Heart right ventricle (tissue), 16 donors: ENCODE measurements at regions of chr16 and their contacts with region 1.

Region 1: GRCh38 chr16:20073203-20074098 is at the start of gene GPR139:
- DNase-seq: no peak
- ATAC-seq: no peak
- H3K4me3 ChIP-seq: peak within 1 kb of the TSS in 1 of 10 donors; percentile 14
- H3K27ac ChIP-seq: no peak within 1 kb of the TSS
- H3K4me1 ChIP-seq: peaks cover 0 to 6% (median 0%) of the 10 kb centered on the region in 9 donors
- H3K27me3 ChIP-seq: peaks cover 4 to 87% (median 56%) of the 10 kb centered on the region in 7 donors
- CTCF ChIP-seq: no peak
- total RNA-seq, gene GPR139: not detected

Region 2: GRCh38 chr16:19595043-19595767 is 478.2 kb before region 1 on chr16:
- intact Hi-C with region 1: no loop called
- DNase-seq: peak; percentile 24 to 50
- ATAC-seq: peak; percentile 52 to 97 (median 88)
- H3K4me3 ChIP-seq: no peak overlapping the region
- H3K27ac ChIP-seq: peak overlapping the region in 4 of 10 donors; percentile 26 to 51 (median 35)
- H3K4me1 ChIP-seq: peaks cover 0 to 9% (median 0%) of the 10 kb centered on the region in 9 donors
- H3K27me3 ChIP-seq: no peaks in the 10 kb centered on the region
- CTCF ChIP-seq: no peak

Region 3: DNA sequence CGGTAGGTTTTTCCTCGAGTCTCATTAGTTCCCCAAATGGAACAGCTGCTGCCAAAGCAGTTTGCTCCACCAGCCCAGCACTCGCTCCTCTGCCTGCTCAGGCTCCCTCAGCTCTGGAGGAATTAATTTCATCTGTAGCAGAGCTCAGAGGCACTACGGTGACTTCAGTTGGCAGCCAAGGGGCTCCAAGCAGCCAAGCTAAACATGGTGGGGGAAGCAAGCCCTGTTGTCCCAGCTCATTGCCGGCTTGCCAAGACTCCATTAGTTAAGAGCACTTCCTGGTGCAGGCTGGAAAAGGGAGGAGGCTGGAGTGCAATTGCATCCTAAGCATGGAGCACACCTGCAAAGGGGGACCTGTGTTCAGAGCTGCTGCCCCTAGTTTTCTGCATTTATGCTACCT is 110.2 kb before region 1 on chr16:
- intact Hi-C with region 1: no loop called
- DNase-seq: peak; percentile 36 to 63
- ATAC-seq: peak in 6 of 8 donors; percentile 29 to 96 (median 60)
- H3K4me3 ChIP-seq: no peak overlapping the region
- H3K27ac ChIP-seq: no peak overlapping the region
- H3K4me1 ChIP-seq: no peaks in the 10 kb centered on the region
- H3K27me3 ChIP-seq: peaks cover 0 to 38% (median 4%) of the 10 kb centered on the region in 7 donors
- CTCF ChIP-seq: no peak

Region 4: GRCh38 chr16:20014034-20014433 is 59.4 kb before region 1 on chr16:
- intact Hi-C with region 1: loop called in 1 of 10 experiments (anchors 10 kb)
- DNase-seq: no peak
- ATAC-seq: no peak
- H3K4me3 ChIP-seq: no peak overlapping the region
- H3K27ac ChIP-seq: no peak overlapping the region
- H3K4me1 ChIP-seq: no peaks in the 10 kb centered on the region
- H3K27me3 ChIP-seq: peaks cover 0 to 22% (median 5%) of the 10 kb centered on the region in 7 donors
- CTCF ChIP-seq: no peak

Region 5: GRCh38 chr16:20216591-20217217 is 143.3 kb after region 1 on chr16:
- intact Hi-C with region 1: no loop called
- DNase-seq: no peak
- ATAC-seq: no peak
- H3K4me3 ChIP-seq: peak overlapping the region in 1 of 10 donors; percentile 8
- H3K27ac ChIP-seq: peak overlapping the region in 3 of 10 donors; percentile 23 to 57 (median 29)
- H3K4me1 ChIP-seq: peaks cover 0 to 4% (median 0%) of the 10 kb centered on the region in 9 donors
- H3K27me3 ChIP-seq: peaks cover 0 to 8% (median 0%) of the 10 kb centered on the region in 7 donors
- CTCF ChIP-seq: no peak